GM10248 (cell line): ENCODE measurements at regions of chr3 and their contacts with region 1.

Region 1: DNA sequence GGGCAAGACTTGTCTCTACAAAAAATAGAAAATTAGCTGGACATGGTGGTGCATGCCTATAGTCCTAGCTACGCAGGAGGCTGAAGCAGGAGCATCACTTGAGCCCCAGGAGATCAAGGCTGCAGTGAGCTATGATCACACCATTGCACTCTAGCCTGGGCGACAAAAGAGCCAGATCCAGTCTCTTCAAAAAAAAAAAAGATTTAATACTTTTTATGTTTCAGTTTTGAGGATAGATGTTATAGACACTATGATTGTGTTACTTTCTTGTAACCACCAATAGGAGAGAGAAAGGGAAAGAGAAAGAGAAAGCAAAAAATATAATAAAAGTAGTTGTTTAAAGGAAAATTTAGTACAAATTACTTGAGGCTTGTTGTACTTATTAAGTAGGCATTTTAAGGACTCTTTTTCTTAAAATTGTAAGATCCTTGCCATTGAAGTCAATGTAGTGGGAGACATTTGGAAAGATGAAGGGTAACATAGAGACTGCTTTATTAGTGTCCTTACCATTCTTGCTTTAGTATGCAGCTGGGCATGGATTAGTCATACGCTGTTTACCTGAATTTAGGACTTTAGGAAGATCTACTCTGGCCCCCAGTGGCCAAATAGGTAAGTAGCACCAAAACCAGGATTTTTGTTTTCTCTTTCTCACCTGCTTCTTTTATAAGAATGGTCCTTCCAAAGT is 35.1 kb upstream of the ZDHHC23 start:
- DNase-seq: peak; percentile 56
- CTCF ChIP-seq: peak; percentile 71

Region 2: DNA sequence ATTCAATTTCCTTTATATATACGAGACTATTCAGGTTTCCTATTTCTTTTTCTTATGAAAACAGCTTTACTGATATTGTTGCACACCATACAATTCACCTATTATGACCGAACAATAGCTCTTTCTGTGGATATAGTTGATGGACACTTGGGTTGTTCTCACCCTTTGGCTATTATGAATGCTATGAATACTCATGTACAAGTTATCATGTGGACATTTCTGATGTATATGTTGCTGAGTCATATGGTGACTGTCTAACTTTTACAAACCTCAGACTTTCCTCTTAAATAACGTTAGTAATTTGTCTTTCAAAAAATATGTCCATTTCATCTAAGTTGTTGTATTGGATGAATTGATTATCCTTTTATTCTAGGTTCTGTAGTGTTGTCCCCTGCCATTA is 200.6 kb before region 1 on chr3:
- CTCF ChIA-PET with region 1: no interaction called
- POLR2A ChIA-PET with region 1: no interaction called
- DNase-seq: no peak
- CTCF ChIP-seq: no peak

Region 3: GRCh38 chr3:113838631-113839209 is 74.0 kb before region 1 on chr3 and contains the start of gene GRAMD1C:
- CTCF ChIA-PET with region 1: interaction called, 22 read pairs
- POLR2A ChIA-PET with region 1: no interaction called
- DNase-seq: peak; percentile 88
- CTCF ChIP-seq: peak; percentile 96

Region 4: DNA sequence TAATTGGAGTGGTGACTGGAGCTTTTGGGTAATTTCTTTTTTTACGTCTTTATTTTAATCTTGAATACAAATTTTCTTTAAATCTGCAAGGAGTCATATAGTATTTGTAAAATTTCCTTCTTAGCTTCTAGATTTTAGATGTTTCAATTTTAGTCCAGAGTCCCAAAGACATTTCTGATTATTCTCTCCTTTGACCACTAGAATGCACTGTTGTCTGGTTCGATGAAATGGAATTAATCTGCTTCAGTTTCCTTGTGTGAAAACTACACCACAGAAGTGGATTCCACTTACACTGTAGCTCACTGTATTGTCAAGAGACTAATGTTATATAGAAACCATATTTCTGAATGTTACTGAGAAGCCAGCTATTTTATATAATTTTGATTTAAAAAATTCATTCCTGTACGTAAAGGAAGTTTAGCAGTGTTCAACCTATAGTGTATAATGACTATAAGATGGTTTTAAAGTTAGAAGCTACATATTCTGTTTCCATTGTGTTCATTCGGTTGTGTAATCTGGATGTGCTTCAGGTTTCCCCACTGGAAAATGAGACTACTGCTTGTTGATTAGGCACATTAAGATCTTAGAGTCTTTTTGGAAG is 68.0 kb before region 1 on chr3:
- CTCF ChIA-PET with region 1: interaction called, 20 read pairs
- POLR2A ChIA-PET with region 1: no interaction called
- DNase-seq: peak; percentile 43
- CTCF ChIP-seq: peak; percentile 47

Region 5: DNA sequence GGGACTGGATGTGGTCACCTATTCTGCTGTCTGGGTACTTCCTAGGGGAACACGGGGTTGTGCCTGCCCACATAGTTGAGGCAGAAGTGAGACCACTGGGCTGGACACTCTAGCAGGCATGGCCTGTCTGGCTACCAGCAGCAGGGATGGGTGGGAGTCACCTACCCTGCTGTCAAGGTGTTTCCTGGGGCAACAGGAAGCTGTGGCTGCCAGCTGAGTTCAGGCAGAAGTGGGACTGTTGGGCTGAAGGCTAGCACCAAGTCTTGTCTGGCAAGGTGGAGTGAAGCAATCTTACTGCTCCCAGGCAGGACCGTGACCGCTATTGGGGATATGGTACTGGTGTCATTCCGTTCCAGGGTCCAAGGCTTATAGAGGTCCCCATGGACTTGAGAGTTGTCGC is 14.9 kb after region 1 on chr3:
- CTCF ChIA-PET with region 1: interaction called, 10 read pairs
- POLR2A ChIA-PET with region 1: no interaction called
- DNase-seq: no peak
- CTCF ChIP-seq: no peak